Right ventricle myocardium inferior (tissue), 1 donor: ENCODE measurements at regions of chr5 and their contacts with region 1.

Region 1: GRCh38 chr5:74766849-74767578 is at the starts of genes GFM2 and NSA2:
- DNase-seq: peak; percentile 95
- ATAC-seq: peak; percentile 99
- total RNA-seq, gene GFM2: 44.6 TPM
- total RNA-seq, gene NSA2: 45.1 TPM

Region 2: GRCh38 chr5:73565139-73565968 is 1201.7 kb before region 1 on chr5 and contains the starts of genes ANKRA2 and UTP15:
- intact Hi-C with region 1: loop called (anchors 10 kb)
- DNase-seq: peak; percentile 100
- ATAC-seq: peak; percentile 99
- total RNA-seq, gene ANKRA2: 14.4 TPM
- total RNA-seq, gene UTP15: 11.0 TPM

Region 3: DNA sequence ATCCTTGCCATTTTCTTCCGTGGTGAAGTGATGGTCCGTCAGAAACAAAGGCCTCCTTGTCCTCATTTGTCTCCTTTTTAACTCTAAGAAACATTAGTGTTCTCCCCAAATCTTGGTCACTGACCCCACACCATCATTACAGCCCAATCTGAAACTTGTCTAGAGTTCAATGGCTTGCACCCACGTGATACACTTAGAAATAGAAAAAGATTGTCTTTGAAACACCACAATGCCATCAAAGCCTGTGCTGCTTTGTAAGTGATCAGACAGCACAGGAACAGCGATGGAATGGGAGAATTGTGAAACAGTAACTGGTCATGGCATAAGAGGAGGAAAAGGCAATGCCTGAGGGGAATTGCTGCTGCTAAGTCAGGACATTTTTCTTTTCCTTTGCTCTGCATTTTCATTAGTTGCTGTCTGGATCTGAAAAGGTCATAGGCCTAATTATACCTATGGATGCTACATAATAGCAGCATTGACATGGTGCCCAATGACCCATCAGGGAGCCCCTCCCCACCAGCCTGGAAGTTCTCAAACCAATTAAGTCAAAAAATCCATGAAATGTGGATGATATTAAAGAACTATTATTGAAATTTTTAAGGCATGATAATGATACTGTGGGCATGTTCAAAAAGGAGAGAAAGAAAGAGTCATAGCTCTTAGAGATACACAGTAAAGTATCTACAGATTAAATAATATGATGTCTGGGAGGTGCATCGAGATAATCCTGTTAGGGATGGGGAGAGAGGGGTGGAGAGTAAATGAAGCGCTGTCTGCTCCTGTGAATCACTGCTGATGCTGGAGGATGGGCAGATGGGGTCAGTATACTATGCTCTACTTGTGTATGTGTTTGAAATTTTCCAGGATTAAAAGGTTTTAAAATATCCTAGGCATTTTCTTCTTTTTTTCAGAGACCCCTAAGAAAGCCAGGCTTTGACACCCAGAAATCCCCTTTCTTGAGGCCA is 210.1 kb before region 1 on chr5:
- intact Hi-C with region 1: no loop called
- DNase-seq: no peak
- ATAC-seq: no peak

Region 4: DNA sequence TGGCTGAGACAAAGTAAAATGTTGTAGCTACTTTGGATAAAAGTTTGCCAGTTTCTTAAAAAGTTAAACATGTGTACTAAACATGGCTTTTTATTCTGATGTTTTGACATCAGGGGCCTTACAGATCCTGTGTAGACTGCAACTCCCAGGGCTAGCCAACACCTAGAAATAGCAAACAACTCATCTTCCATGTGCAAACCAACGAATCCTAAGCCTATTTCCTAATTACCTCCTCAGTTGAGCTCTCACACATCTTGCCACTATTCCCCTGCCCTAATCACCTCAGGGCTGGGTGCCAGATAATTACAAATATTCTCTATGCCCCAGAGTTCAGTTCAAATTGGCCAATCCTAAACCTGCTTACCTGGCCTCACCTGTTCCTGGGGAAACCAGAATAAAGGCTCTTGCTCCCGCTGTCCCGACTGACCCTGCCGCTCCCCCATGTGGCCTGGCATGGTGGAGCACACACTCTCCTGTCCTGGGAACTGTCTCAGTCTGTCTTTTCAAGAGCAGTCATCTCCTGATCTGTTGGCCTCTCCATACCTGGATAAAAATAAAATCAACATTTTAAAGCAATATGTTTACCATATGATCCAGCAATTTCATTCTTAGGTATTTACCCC is 136.3 kb after region 1 on chr5:
- intact Hi-C with region 1: loop called (anchors 5 kb)
- DNase-seq: no peak
- ATAC-seq: peak; percentile 63

Region 5: GRCh38 chr5:74919487-74919886 is 152.5 kb after region 1 on chr5:
- intact Hi-C with region 1: loop called (anchors 5 kb)
- DNase-seq: no peak
- ATAC-seq: no peak